IMR-90 (cell line): ENCODE measurements at regions of chr20 and their contacts with region 1.

Region 1: GRCh38 chr20:47334022-47334551 is 22.4 kb downstream of the ZMYND8 start:
- DNase-seq: peak; percentile 96
- ATAC-seq: peak; percentile 85
- H3K4me3 ChIP-seq: peak overlapping the region; percentile 4; the same call in 1 of the 2 replicates
- H3K27ac ChIP-seq: peak overlapping the region; percentile 9; the same call in 1 of the 2 replicates
- H3K4me1 ChIP-seq: peaks cover 19% of the 10 kb centered on the region
- H3K27me3 ChIP-seq: no peaks in the 10 kb centered on the region
- CTCF ChIP-seq: no peak
- POLR2A ChIP-seq: 0 out of 2 replicates have a peak, but pooled peaks have one; percentile 17
- RAD21 ChIP-seq: peak; percentile 13; the same call in 1 of the 2 replicates

Region 2: GRCh38 chr20:47317127-47317895 is 16.8 kb before region 1 on chr20:
- CTCF ChIA-PET with region 1: no interaction called
- POLR2A ChIA-PET with region 1: no interaction called
- dilution Hi-C with region 1: no loop called
- in situ Hi-C with region 1: no loop called
- intact Hi-C with region 1: loop called (anchors 1 kb)
- DNase-seq: peak; percentile 98
- ATAC-seq: peak; percentile 63
- H3K4me3 ChIP-seq: no peak overlapping the region
- H3K27ac ChIP-seq: peak overlapping the region; percentile 95
- H3K4me1 ChIP-seq: peaks cover 46% of the 10 kb centered on the region
- H3K27me3 ChIP-seq: no peaks in the 10 kb centered on the region
- CTCF ChIP-seq: no peak
- POLR2A ChIP-seq: peak; percentile 78; the same call in 1 of the 2 replicates
- RAD21 ChIP-seq: peak; percentile 14; the same call in 1 of the 2 replicates

Region 3: GRCh38 chr20:47356526-47357295 is 22.6 kb after region 1 on chr20 and contains the start of gene ZMYND8:
- CTCF ChIA-PET with region 1: interaction called, 3 read pairs
- POLR2A ChIA-PET with region 1: interaction called, 11 read pairs
- dilution Hi-C with region 1: no loop called
- in situ Hi-C with region 1: no loop called
- intact Hi-C with region 1: no loop called
- DNase-seq: peak; percentile 92
- ATAC-seq: peak; percentile 58
- H3K4me3 ChIP-seq: no peak within 1 kb of the TSS
- H3K27ac ChIP-seq: peak within 1 kb of the TSS; percentile 98
- H3K4me1 ChIP-seq: peaks cover 76% of the 10 kb centered on the region
- H3K27me3 ChIP-seq: no peaks in the 10 kb centered on the region
- CTCF ChIP-seq: no peak
- POLR2A ChIP-seq: 0 out of 2 replicates have a peak, but pooled peaks have one; percentile 12
- RAD21 ChIP-seq: no peak
- total RNA-seq, gene ZMYND8: 23.6 and 24.0 TPM in 2 replicates

Region 4: GRCh38 chr20:47392015-47392720 is 58.1 kb after region 1 on chr20:
- CTCF ChIA-PET with region 1: no interaction called
- POLR2A ChIA-PET with region 1: no interaction called
- dilution Hi-C with region 1: no loop called
- in situ Hi-C with region 1: no loop called
- intact Hi-C with region 1: no loop called
- DNase-seq: peak; percentile 97
- ATAC-seq: peak; percentile 98
- H3K4me3 ChIP-seq: no peak overlapping the region
- H3K27ac ChIP-seq: peak overlapping the region; percentile 87
- H3K4me1 ChIP-seq: peaks cover 7% of the 10 kb centered on the region
- H3K27me3 ChIP-seq: no peaks in the 10 kb centered on the region
- CTCF ChIP-seq: no peak
- POLR2A ChIP-seq: no peak
- RAD21 ChIP-seq: no peak